ENCODE measurements at regions of chr3 and their contacts with region 1.

Region 1: DNA sequence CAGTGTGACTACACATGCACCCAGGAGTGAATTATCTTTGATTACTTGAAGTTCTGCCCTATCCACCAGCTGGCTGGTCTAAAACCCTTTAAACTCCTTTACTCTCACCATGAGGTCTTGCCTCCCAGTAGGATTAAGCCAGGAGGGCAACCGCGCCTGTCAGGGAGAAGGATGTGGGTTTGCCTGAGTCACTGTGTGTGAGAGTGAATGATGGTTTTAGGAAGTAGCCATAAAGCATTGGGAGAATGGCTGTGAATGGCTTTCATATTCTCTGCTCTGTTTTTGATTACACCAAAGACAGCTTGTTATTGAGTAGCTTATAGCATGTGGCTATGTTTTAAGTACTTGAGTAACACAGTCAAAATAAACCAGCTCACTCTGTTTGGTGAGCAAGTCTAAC is 637.7 kb upstream of the TBL1XR1 start:
- DNase-seq: peak; percentile 94
- ATAC-seq: peak; percentile 71
- H3K4me3 ChIP-seq: no peak overlapping the region
- H3K27ac ChIP-seq: peak overlapping the region; percentile 15; the same call in 1 of the 2 replicates
- H3K4me1 ChIP-seq: peaks cover 19% of the 10 kb centered on the region
- H3K27me3 ChIP-seq: no peaks in the 10 kb centered on the region
- CTCF ChIP-seq: no peak
- POLR2A ChIP-seq: no peak
- RAD21 ChIP-seq: no peak

Region 2: GRCh38 chr3:177606891-177607290 is 228.1 kb before region 1 on chr3:
- CTCF ChIA-PET with region 1: no interaction called
- POLR2A ChIA-PET with region 1: no interaction called
- dilution Hi-C with region 1: no loop called
- in situ Hi-C with region 1: no loop called
- intact Hi-C with region 1: no loop called
- DNase-seq: no peak
- ATAC-seq: no peak
- H3K4me3 ChIP-seq: no peak overlapping the region
- H3K27ac ChIP-seq: no peak overlapping the region
- H3K4me1 ChIP-seq: peaks cover 18% of the 10 kb centered on the region
- H3K27me3 ChIP-seq: no peaks in the 10 kb centered on the region
- CTCF ChIP-seq: no peak
- POLR2A ChIP-seq: no peak
- RAD21 ChIP-seq: no peak

Region 3: DNA sequence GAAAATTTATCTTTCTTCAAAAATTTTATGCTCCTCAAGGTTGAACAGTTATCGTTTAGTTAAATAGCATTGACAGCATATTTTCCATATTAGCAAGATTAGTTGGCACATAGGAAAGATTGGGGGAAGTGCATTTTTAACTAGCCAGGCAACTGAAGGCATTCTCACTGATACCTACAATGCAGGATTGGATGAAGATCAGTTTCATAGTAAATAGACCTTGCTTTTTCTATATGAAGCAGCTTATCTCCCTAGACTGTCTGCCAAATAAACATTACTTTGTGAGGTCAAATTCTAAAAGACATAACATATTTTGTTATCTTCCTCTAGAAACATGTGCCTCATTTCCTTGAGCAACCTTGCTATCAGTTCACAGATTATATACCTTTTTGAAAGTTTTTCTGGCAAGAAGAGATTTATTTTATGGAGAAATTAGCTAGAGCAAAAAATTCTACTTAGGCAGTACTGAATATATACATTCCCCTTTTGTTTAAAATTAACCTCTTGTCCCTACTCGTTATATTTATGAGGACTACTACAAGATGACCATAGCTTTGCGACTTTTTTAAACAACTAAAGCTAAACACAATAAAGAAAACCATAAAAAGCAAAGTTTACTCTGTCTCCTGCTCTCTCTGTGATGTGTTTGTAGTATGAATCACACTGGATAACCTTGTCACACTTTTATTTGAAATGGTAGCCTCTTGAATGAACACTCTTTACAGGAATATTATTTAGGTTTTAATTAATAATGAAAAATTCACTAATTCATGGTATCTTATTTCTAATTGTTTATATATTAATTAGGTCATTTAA is 17.2 kb after region 1 on chr3:
- CTCF ChIA-PET with region 1: no interaction called
- POLR2A ChIA-PET with region 1: no interaction called
- dilution Hi-C with region 1: no loop called
- in situ Hi-C with region 1: no loop called
- intact Hi-C with region 1: loop called (anchors 1 kb)
- DNase-seq: peak; percentile 27
- ATAC-seq: peak; percentile 77
- H3K4me3 ChIP-seq: no peak overlapping the region
- H3K27ac ChIP-seq: no peak overlapping the region
- H3K4me1 ChIP-seq: peaks cover 2% of the 10 kb centered on the region; the same call in 1 of the 2 replicates
- H3K27me3 ChIP-seq: no peaks in the 10 kb centered on the region
- CTCF ChIP-seq: no peak
- POLR2A ChIP-seq: no peak
- RAD21 ChIP-seq: no peak

Measured in IMR-90 (cell line).